Adrenal gland (tissue), 19 donors: ENCODE measurements at regions of chr16 and their contacts with region 1.

Region 1: GRCh38 chr16:27449434-27450195 is 47.6 kb downstream of the IL21R start:
- DNase-seq: no peak
- H3K4me3 ChIP-seq: no peak overlapping the region
- H3K27ac ChIP-seq: peak overlapping the region in 1 of 5 donors; percentile 45
- H3K4me1 ChIP-seq: no peaks in the 10 kb centered on the region
- H3K27me3 ChIP-seq: peaks cover 8% of the 10 kb centered on the region
- CTCF ChIP-seq: no peak
- POLR2A ChIP-seq: no peak

Region 2: GRCh38 chr16:27374804-27375425 is 74.7 kb before region 1 on chr16:
- intact Hi-C with region 1: loop called in 1 of 2 experiments (anchors 10 kb)
- DNase-seq: peak; percentile 53 to 84 (median 70)
- H3K4me3 ChIP-seq: no peak overlapping the region
- H3K27ac ChIP-seq: peak overlapping the region in 2 of 5 donors; percentile 42
- H3K4me1 ChIP-seq: no peaks in the 10 kb centered on the region
- H3K27me3 ChIP-seq: no peaks in the 10 kb centered on the region
- CTCF ChIP-seq: peak in 5 of 6 experiments; percentile 32 to 61 (median 52)
- POLR2A ChIP-seq: no peak

Region 3: DNA sequence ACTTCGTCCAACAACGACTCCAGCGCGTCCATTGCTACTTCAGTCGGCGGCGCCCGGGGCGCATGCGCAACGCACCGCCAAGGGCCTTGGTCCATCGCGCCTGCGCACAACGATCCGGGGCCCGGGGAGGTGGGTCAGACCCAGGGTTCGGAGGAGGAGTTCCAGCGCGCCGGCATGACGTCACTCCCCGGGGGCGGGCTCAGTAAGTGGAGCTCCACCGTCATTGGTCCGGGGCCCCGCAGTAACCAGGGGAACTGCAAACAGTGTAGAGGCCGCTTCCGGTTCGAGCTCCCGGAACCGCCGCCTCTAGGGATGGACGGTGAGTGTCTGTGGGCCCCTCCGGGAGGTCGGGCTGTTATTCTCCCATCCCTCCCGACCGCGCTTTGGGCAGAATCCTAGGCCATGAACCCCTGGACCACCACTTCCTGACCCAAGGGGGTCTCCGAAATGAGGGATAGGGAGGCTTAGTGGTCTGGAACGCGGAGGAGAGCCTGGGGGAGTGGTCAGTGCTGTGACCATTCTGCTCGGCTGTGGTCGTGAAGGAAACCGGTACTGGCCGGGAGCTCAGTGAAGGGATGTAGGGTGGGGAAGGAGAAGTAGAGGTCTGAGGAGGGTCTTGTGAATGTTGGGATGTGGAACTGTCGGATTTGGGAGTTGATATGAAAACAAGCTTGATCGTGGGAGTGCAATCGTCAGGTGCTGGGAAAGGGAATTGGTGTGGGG is 100.4 kb after region 1 on chr16 and contains the starts of genes GTF3C1 and KATNIP:
- intact Hi-C with region 1: no loop called
- DNase-seq: peak; percentile 100
- H3K4me3 ChIP-seq: peak within 1 kb of the TSS; percentile 48 to 95 (median 60)
- H3K27ac ChIP-seq: peak within 1 kb of the TSS in 4 of 5 donors; percentile 2 to 85 (median 70)
- H3K4me1 ChIP-seq: peaks cover 24 to 47% of the 10 kb centered on the region in 2 donors
- H3K27me3 ChIP-seq: no peaks in the 10 kb centered on the region
- CTCF ChIP-seq: no peak
- POLR2A ChIP-seq: peak in 1 of 2 donors; percentile 83
- total RNA-seq, gene GTF3C1: 55.1 to 105 (median 78.4) TPM
- total RNA-seq, gene KATNIP: 11.4 to 80.4 (median 17.7) TPM